Prostate gland (tissue), 2 donors: ENCODE measurements at regions of chr7 and their contacts with region 1.

Region 1: GRCh38 chr7:138981332-138982203 is at the start of gene KIAA1549:
- DNase-seq: peak; percentile 54
- H3K4me3 ChIP-seq: peak within 1 kb of the TSS; percentile 50 to 58
- H3K27ac ChIP-seq: peak within 1 kb of the TSS; percentile 57 to 63
- H3K4me1 ChIP-seq: no peaks in the 10 kb centered on the region
- H3K27me3 ChIP-seq: no peaks in the 10 kb centered on the region
- CTCF ChIP-seq: peak in 1 of 4 experiments; percentile 65
- POLR2A ChIP-seq: no peak
- total RNA-seq, gene KIAA1549: 3.7 to 8.8 TPM

Region 2: DNA sequence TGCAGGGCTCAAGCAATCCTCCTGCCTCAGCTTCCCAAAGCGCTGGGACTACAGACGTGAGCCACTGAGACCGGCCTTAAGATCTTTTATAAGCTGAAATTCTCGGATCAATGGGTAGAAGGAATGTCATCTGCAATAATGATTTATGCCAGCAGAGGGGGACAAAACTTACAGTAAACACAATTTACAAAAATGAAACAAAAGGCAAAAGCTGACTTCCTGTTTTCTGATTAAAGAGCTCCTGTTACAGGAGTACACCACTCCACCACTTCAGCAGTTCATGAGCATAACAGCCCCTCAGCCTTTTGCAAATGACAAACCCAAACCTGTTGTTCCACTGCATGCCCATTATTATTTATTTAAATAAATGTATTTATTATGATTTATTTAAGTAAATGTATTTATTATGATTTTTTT is 95.1 kb before region 1 on chr7:
- intact Hi-C with region 1: loop called (anchors 2 kb)
- DNase-seq: peak; percentile 33
- H3K4me3 ChIP-seq: no peak overlapping the region
- H3K27ac ChIP-seq: no peak overlapping the region
- H3K4me1 ChIP-seq: no peaks in the 10 kb centered on the region
- H3K27me3 ChIP-seq: no peaks in the 10 kb centered on the region
- CTCF ChIP-seq: peak in 3 of 4 experiments; percentile 64 to 78 (median 65)
- POLR2A ChIP-seq: no peak

Region 3: GRCh38 chr7:138924501-138925225 is 56.9 kb before region 1 on chr7:
- intact Hi-C with region 1: loop called (anchors 5 kb)
- DNase-seq: no peak
- H3K4me3 ChIP-seq: no peak overlapping the region
- H3K27ac ChIP-seq: no peak overlapping the region
- H3K4me1 ChIP-seq: no peaks in the 10 kb centered on the region
- H3K27me3 ChIP-seq: no peaks in the 10 kb centered on the region
- CTCF ChIP-seq: no peak
- POLR2A ChIP-seq: no peak